AG04450 (cell line): ENCODE measurements at regions of chr10 and their contacts with region 1.

Region 1: DNA sequence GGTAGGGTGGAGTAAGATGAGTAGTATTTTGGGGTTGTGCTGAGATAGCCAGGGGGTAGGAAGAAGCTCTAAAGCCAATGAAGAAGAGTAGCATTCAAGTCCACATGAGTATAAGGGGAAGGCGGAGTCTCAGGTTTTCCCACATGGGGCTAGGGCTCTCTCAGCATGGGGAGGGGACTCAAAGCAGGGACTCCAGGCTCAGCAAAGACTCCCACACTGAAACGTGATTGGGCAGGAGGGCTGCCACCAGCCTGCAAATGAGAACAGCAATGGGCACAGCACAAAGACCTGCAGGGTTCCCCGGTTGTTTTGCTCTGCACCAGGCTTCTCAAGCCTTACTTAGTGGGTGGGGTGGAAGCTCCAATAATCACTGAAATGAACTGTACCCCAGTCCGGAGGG is 1.5 kb upstream of the NRAP start:
- DNase-seq: no peak
- H3K4me3 ChIP-seq: no peak overlapping the region
- H3K27ac ChIP-seq: no peak overlapping the region
- H3K27me3 ChIP-seq: no peaks in the 10 kb centered on the region
- CTCF ChIP-seq: no peak

Region 2: GRCh38 chr10:113678690-113679462 is 13.5 kb after region 1 on chr10:
- CTCF ChIA-PET with region 1: interaction called, 10 read pairs
- POLR2A ChIA-PET with region 1: no interaction called
- DNase-seq: peak; percentile 69
- H3K4me3 ChIP-seq: peak overlapping the region; percentile 98
- H3K27ac ChIP-seq: peak overlapping the region; percentile 89
- H3K27me3 ChIP-seq: no peaks in the 10 kb centered on the region
- CTCF ChIP-seq: peak; percentile 76